AG04450 (cell line): ENCODE measurements at regions of chr3 and their contacts with region 1.

Region 1: DNA sequence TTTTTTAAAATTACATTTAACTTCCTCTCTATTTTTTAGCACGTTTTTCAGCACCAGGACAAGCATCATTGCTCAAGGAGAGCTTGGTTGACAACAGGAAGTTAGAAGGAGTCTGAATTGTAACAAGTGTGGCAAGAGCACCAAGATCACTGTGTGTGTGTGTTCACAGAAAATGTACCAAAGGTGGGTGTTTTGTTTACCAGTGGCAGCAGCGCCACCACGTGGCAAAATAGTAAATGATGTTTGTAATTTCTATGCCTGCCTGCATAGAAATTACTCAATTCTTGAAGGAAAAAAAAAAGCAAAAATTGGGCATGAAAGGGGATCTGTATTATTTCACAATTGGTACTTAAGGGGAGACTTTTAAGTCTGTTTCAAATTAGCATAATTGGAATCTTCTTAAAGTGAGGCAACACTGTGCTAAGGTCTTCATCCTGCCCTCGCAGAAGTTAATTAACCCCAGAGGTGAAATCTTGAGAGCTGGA is 7.4 kb upstream of the U2SURP start:
- DNase-seq: peak; percentile 41
- H3K4me3 ChIP-seq: no peak overlapping the region
- H3K27ac ChIP-seq: no peak overlapping the region
- H3K27me3 ChIP-seq: no peaks in the 10 kb centered on the region
- CTCF ChIP-seq: peak; percentile 67

Region 2: GRCh38 chr3:142366436-142366835 is 627.6 kb before region 1 on chr3:
- CTCF ChIA-PET with region 1: no interaction called
- POLR2A ChIA-PET with region 1: no interaction called
- DNase-seq: no peak
- H3K4me3 ChIP-seq: no peak overlapping the region
- H3K27ac ChIP-seq: no peak overlapping the region
- H3K27me3 ChIP-seq: no peaks in the 10 kb centered on the region
- CTCF ChIP-seq: 0 out of 2 replicates have a peak, but pooled peaks have one; percentile 20

Region 3: GRCh38 chr3:142586803-142587406 is 407.1 kb before region 1 on chr3:
- CTCF ChIA-PET with region 1: interaction called, 10 read pairs
- POLR2A ChIA-PET with region 1: no interaction called
- DNase-seq: peak; percentile 32
- H3K4me3 ChIP-seq: no peak overlapping the region
- H3K27ac ChIP-seq: no peak overlapping the region
- H3K27me3 ChIP-seq: no peaks in the 10 kb centered on the region
- CTCF ChIP-seq: peak; percentile 65

Region 4: DNA sequence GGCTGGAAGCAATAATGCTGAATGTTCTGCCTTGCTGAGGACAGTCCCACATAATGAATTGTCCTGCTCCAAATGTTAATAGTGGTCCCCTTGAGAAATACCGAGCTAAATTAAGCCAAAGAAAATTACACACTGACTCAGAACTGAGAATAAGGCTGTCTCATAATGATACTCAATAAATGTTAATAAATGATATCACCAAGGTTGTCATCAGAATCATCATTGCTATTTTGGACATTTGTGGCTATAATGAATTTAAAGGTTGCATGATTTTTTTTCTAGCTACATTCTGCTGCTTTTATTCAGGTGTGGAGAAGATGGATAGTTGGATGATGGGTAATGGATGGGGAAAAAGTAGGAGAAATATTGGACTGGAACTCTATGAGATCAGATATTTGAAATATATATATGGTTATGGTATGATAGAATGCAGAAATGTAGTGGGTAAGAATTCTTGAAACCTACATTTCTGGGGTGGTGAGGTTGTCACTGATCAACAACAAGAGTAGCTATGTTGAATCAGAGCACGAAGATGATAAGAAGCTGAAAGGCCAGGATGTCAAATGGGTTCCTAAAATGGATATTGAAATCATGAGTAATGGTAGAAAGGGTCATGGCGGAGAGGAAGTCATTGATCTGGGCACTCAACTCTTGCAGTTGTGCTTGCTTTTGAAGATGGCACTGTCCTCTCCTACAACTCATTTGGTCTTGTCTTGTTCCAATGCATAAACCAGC is 138.4 kb after region 1 on chr3:
- CTCF ChIA-PET with region 1: no interaction called
- POLR2A ChIA-PET with region 1: no interaction called
- DNase-seq: no peak
- H3K4me3 ChIP-seq: no peak overlapping the region
- H3K27ac ChIP-seq: no peak overlapping the region
- H3K27me3 ChIP-seq: no peaks in the 10 kb centered on the region
- CTCF ChIP-seq: no peak

Region 5: DNA sequence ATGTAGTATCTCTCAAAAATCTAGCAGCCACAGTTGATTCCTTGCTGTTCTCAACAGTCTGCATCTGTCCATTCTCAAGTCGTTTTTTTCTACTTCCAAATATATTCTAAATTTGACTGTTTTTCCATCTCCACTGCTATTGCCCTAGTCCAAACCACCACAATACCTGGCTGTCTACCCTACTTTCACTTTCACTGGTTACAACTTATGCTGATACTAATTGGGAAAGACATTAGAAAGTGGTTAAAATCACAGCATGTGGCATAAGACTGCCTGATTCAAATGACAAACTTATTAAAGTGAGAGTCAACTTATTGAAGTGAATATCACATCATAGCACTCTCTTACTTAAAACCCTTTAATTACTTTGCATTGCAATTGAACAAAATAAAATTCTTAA is 198.2 kb after region 1 on chr3:
- CTCF ChIA-PET with region 1: no interaction called
- POLR2A ChIA-PET with region 1: no interaction called
- DNase-seq: no peak
- H3K4me3 ChIP-seq: no peak overlapping the region
- H3K27ac ChIP-seq: no peak overlapping the region
- H3K27me3 ChIP-seq: peaks cover 3% of the 10 kb centered on the region
- CTCF ChIP-seq: no peak

Region 6: GRCh38 chr3:143207338-143207961 is 213.4 kb after region 1 on chr3:
- CTCF ChIA-PET with region 1: no interaction called
- POLR2A ChIA-PET with region 1: no interaction called
- DNase-seq: peak; percentile 32
- H3K4me3 ChIP-seq: no peak overlapping the region
- H3K27ac ChIP-seq: no peak overlapping the region
- H3K27me3 ChIP-seq: no peaks in the 10 kb centered on the region
- CTCF ChIP-seq: no peak